Activated naive CD4-positive, alpha-beta T cell treated with anti-CD3 and anti-CD28 coated beads for 36 hours (primary cell): ENCODE measurements at regions of chr18 and their contacts with region 1.

Region 1: GRCh38 chr18:11995445-11996189 is 14.3 kb downstream of the IMPA2 start:
- DNase-seq: peak; percentile 74
- H3K4me3 Mint-ChIP-seq: no peak overlapping the region
- H3K27ac Mint-ChIP-seq: no peak overlapping the region
- H3K4me1 Mint-ChIP-seq: peaks cover 8% of the 10 kb centered on the region
- H3K27me3 Mint-ChIP-seq: no peaks in the 10 kb centered on the region

Region 2: DNA sequence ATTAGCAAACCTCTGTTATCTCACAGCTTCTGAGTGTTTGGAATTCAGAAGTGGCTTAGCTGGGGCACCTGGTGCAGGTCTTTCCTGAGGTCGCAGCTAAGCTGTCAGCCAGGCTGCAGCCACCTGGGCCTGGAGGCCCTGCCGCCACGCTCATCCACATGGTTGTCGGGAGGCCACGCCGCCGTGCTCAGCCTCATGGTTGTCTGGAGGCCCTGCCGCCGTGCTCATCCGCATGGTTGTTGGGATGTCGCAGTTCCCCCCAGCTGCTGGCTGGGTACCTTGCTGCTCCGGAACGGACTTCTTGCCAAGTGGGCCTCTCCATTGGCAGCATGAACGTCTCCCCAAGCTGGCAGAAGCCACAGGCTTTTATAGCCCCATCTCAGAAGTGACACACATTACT is 63.2 kb before region 1 on chr18:
- CTCF ChIA-PET with region 1: interaction called, 234 read pairs
- intact Hi-C with region 1: no loop called
- DNase-seq: no peak
- H3K4me3 Mint-ChIP-seq: no peak overlapping the region
- H3K27ac Mint-ChIP-seq: no peak overlapping the region
- H3K4me1 Mint-ChIP-seq: no peaks in the 10 kb centered on the region
- H3K27me3 Mint-ChIP-seq: no peaks in the 10 kb centered on the region